ENCODE measurements at regions of chr4 and their contacts with region 1.

Region 1: GRCh38 chr4:158729716-158730559 is 6.7 kb upstream of the PPID start:
- DNase-seq: no peak
- ATAC-seq: peak; percentile 93

Region 2: DNA sequence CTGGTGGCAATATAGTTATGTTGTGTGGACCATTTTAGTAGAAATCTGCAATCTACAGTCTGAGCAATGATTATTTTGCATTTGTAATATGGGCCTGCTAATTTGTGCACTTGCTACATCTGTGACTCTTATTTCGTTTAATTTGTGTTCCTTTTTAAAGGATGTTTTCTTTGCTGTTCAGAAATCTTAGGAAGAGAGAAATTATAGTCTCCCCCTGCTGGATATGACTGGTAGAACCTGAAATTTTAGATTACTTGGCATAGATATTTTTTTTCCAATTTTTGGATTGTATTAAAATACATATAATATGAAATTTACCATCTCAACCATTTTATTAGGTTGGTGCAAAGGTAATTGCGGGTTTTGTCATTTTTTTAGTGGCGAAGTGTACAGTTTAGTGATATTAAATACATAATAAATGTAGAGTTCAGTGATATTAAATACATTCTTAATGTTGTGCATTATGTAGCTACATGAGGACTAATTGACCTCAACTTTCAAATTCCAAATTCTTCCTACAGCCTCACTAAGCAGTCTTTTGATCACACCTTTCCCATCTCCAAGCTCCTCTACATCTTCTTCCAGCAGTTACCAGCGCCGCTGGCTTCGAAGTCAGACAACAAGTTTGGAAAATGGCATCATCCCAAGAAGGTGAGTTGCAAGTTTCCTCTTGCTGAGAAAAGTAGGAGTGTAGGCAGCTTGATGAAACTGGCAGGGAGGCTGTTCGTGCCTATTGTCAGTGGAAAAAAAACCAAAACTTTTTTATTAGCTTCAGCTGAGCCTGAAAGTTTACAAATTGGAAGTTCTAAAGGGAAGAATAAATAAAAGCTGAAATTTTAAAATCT is 121.1 kb after region 1 on chr4:
- intact Hi-C with region 1: loop called (anchors 1 kb)
- DNase-seq: no peak
- ATAC-seq: no peak